GM10248 (cell line): ENCODE measurements at regions of chr2 and their contacts with region 1.

Region 1: GRCh38 chr2:196076778-196077568 is 8.3 kb upstream of the DNAH7 start:
- DNase-seq: no peak
- CTCF ChIP-seq: no peak

Region 2: DNA sequence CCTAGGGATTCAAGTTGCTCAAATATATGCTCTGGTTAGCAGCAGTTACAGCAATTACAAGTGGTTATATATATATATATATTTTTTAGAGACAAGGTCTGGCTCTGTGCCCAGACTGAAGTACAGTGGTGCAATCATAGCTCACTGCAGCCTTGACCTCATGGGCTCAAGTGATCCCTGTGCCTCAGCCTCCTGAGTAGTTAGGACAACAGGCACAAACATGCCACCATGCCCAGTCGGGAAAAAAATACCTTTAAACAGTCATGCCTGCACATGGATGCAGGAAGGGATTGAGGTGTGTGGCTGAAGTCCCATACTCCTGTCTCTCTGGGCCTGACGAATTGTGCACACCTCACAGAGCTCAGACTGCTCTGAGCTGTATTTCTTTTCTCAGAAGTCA is 11.2 kb after region 1 on chr2:
- CTCF ChIA-PET with region 1: interaction called, 15 read pairs
- POLR2A ChIA-PET with region 1: no interaction called
- DNase-seq: no peak
- CTCF ChIP-seq: no peak

Region 3: DNA sequence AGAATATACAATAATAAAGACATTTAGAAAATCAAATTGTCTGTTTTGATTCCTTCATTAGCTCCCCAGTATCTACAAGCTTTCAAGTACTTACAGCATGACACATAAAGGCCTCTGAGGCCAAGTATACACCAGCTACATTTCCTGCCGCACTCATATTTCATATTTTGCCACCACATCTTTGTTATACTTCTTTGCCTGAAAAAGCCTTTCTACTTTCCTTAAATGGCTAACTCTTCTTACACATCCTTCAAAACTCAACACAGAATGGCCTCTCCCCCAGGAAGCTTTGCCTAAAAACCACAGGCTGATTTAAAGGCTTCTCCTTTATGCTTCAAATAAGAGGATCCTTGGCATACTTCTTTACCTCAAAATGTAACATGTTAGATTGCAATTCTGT is 89.9 kb after region 1 on chr2:
- CTCF ChIA-PET with region 1: interaction called, 13 read pairs
- POLR2A ChIA-PET with region 1: no interaction called
- DNase-seq: no peak
- CTCF ChIP-seq: no peak

Region 4: GRCh38 chr2:196277002-196277401 is 200.0 kb after region 1 on chr2:
- CTCF ChIA-PET with region 1: interaction called, 39 read pairs
- POLR2A ChIA-PET with region 1: no interaction called
- DNase-seq: peak; percentile 64
- CTCF ChIP-seq: peak; percentile 75

Region 5: GRCh38 chr2:196337208-196337953 is 260.4 kb after region 1 on chr2:
- CTCF ChIA-PET with region 1: interaction called, 22 read pairs
- POLR2A ChIA-PET with region 1: no interaction called
- DNase-seq: no peak
- CTCF ChIP-seq: no peak